ENCODE measurements at regions of chr10 and their contacts with region 1.

Region 1: GRCh38 chr10:93916257-93917063 is 22.7 kb downstream of the SLC35G1 start:
- DNase-seq: no peak
- ATAC-seq: peak; percentile 76 to 93 (median 90)
- H3K4me3 ChIP-seq: peak overlapping the region in 2 of 4 donors; percentile 12 to 40
- H3K27ac ChIP-seq: no peak overlapping the region
- H3K4me1 ChIP-seq: peaks cover 0 to 7% (median 0%) of the 10 kb centered on the region in 3 donors
- H3K27me3 ChIP-seq: no peaks in the 10 kb centered on the region
- CTCF ChIP-seq: peak in 3 of 4 donors; percentile 29 to 37 (median 35)

Region 2: DNA sequence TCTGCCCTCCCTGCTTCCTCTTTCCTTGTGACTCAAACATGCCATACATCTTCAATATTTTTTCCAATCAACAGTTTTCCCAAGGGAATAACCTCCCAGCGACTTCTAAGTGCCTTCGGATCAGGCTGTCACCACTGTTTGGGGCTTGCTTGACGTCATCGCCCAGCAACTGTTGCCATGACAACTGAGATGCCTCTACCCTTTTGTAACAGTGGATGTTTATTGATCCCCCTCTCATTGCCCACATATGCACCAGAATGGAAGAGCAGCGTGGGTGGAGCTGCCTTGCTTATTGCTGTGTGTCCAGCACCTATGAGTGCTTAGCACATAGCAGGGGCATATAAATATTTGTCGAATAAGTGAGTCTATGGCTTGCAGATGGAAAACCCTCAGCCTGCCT is 335.6 kb before region 1 on chr10:
- intact Hi-C with region 1: no loop called
- DNase-seq: no peak
- ATAC-seq: no peak
- H3K4me3 ChIP-seq: no peak overlapping the region
- H3K27ac ChIP-seq: no peak overlapping the region
- H3K4me1 ChIP-seq: no peaks in the 10 kb centered on the region
- H3K27me3 ChIP-seq: no peaks in the 10 kb centered on the region
- CTCF ChIP-seq: no peak

Region 3: GRCh38 chr10:94123258-94123995 is 207.0 kb after region 1 on chr10:
- intact Hi-C with region 1: no loop called
- DNase-seq: peak in 1 of 6 donors; percentile 9
- ATAC-seq: peak; percentile 30 to 81 (median 64)
- H3K4me3 ChIP-seq: no peak overlapping the region
- H3K27ac ChIP-seq: peak overlapping the region in 1 of 4 donors; percentile 28
- H3K4me1 ChIP-seq: no peaks in the 10 kb centered on the region
- H3K27me3 ChIP-seq: no peaks in the 10 kb centered on the region
- CTCF ChIP-seq: no peak

Region 4: DNA sequence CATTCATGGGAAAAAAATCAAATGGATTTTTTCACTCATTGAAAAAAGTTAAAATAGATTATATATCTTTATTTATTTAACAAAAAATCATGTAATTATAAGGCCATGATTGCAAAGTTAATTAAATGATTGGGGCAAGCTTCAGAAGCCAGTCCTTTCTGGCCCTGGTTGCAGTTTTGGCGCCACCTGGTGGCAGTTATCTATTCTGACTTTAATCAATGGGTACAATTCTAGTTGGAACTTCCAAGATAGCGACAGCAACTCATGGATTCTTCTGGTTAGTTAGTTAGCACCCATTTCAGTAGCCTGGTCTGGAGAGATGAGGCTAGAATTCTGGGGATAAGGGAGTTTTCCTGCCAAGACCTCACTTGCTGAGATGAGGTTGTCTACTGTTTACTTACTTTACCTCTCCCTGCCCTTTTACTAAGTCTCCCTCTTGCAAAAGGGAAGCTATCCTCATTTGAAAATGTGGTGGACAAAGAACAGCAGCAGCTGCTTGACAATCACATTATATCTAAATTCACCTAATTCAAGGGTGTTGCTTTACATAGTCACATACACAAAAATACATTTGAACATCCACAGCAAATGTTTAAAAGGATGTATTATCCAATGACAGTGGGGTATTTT is 403.9 kb after region 1 on chr10:
- intact Hi-C with region 1: loop called in 2 of 3 experiments (anchors 5 to 10 kb)
- DNase-seq: peak; percentile 49 to 85 (median 59)
- ATAC-seq: peak; percentile 63 to 86 (median 78)
- H3K4me3 ChIP-seq: no peak overlapping the region
- H3K27ac ChIP-seq: no peak overlapping the region
- H3K4me1 ChIP-seq: no peaks in the 10 kb centered on the region
- H3K27me3 ChIP-seq: no peaks in the 10 kb centered on the region
- CTCF ChIP-seq: peak; percentile 71 to 84 (median 82)